Common myeloid progenitor, CD34-positive (primary cell): ENCODE measurements at regions of chr13 and their contacts with region 1.

Region 1: DNA sequence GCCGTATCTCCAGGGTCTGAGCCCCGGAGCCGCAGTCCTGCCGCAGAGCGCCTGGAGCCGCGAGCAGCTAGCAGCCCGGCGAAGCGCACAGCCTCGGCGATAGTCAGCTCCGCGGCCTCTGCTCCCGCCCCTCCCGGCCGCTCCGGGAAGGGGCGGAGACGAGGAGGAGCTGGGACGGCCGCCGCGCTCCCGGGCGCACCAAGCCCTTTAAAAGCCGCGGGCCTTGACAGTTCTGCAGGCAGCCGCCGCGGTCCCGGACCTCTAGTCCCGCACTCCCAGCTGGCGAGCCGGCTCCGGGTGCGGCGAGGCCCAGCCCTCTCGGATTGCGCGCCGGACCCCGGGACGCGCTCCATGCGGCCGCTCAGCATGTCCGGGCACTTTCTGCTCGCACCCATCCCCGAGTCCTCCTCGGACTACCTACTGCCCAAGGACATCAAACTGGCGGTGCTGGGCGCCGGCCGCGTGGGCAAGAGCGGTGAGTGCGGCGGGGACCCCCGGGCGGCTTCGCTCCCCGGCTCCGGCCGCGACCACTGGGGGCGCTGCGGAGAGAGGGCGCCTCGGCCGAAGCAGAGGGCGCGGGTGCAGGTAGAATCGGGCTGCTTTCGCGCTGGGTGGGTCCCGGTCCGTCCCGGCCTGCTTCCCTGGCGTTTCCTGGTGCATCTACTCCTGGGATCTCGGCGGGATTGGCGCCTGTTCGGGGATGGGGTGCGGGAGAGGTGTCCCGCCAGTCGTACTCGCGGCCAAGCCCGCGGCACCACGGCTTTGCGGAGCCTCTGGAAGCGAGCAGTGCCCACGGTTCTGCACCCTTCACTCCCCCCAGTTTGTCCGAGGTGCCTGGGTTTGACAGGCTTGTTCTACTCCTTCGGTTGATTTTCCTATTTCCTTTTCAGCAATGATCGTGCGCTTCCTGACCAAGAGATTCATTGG is at the start of gene RASL11A:
- DNase-seq: peak; percentile 61 to 80 (median 72)
- H3K4me3 ChIP-seq: peak within 1 kb of the TSS; percentile 64 to 83 (median 79)
- H3K27ac ChIP-seq: no peak within 1 kb of the TSS
- H3K4me1 ChIP-seq: peaks cover 0 to 25% (median 19%) of the 10 kb centered on the region in 4 experiments
- H3K27me3 ChIP-seq: peaks cover 0 to 35% (median 7%) of the 10 kb centered on the region in 5 experiments

Region 2: GRCh38 chr13:27283906-27284493 is 13.1 kb after region 1 on chr13:
- CTCF ChIA-PET with region 1: interaction called, 12 read pairs
- POLR2A ChIA-PET with region 1: no interaction called
- DNase-seq: peak; percentile 34 to 56 (median 56)
- H3K4me3 ChIP-seq: no peak overlapping the region
- H3K27ac ChIP-seq: no peak overlapping the region
- H3K4me1 ChIP-seq: peaks cover 0 to 4% (median under 1%) of the 10 kb centered on the region in 4 experiments
- H3K27me3 ChIP-seq: no peaks in the 10 kb centered on the region